Thyroid gland (tissue), 4 donors: ENCODE measurements at regions of chr15 and their contacts with region 1.

Region 1: GRCh38 chr15:80567721-80568157 is 127.4 kb upstream of the ABHD17C start:
- DNase-seq: peak; percentile 71 to 74
- H3K4me3 ChIP-seq: no peak overlapping the region
- H3K27ac ChIP-seq: no peak overlapping the region
- H3K4me1 ChIP-seq: peaks cover 0 to 7% of the 10 kb centered on the region in 2 donors
- H3K27me3 ChIP-seq: no peaks in the 10 kb centered on the region
- CTCF ChIP-seq: peak; percentile 45 to 88 (median 76)
- POLR2A ChIP-seq: no peak

Region 2: GRCh38 chr15:80695104-80695910 is 127.6 kb after region 1 on chr15 and contains the start of gene ABHD17C:
- intact Hi-C with region 1: loop called (anchors 10 kb)
- DNase-seq: peak; percentile 62 to 66
- H3K4me3 ChIP-seq: peak within 1 kb of the TSS; percentile 3 to 74 (median 64)
- H3K27ac ChIP-seq: peak within 1 kb of the TSS in 2 of 3 donors; percentile 78 to 79
- H3K4me1 ChIP-seq: peaks cover 15 to 16% of the 10 kb centered on the region in 2 donors
- H3K27me3 ChIP-seq: no peaks in the 10 kb centered on the region
- CTCF ChIP-seq: no peak
- POLR2A ChIP-seq: peak in 1 of 2 donors; percentile 75
- total RNA-seq, gene ABHD17C: 7.3 to 9.5 (median 8.4) TPM

Region 3: DNA sequence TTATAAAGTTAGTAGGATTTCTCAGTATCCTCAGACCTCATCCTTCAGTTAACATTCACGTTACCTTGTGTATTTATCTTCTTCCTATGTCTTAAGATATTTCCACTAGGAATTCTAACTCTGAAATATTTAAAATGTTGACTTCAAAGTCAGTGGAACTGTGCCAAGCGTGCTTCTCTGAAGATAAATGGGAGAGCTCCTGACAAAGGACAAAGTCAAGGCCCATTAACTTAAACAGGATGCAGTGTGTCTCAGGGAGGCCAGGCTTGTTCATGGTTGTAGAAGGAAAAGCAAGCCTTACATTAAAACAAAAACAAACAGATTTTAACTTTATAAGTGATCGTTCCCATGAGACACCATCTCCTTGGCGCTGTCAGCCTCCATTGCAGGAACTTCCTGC is 168.8 kb after region 1 on chr15:
- intact Hi-C with region 1: no loop called
- DNase-seq: no peak
- H3K4me3 ChIP-seq: no peak overlapping the region
- H3K27ac ChIP-seq: no peak overlapping the region
- H3K4me1 ChIP-seq: no peaks in the 10 kb centered on the region
- H3K27me3 ChIP-seq: no peaks in the 10 kb centered on the region
- CTCF ChIP-seq: no peak
- POLR2A ChIP-seq: no peak

Region 4: DNA sequence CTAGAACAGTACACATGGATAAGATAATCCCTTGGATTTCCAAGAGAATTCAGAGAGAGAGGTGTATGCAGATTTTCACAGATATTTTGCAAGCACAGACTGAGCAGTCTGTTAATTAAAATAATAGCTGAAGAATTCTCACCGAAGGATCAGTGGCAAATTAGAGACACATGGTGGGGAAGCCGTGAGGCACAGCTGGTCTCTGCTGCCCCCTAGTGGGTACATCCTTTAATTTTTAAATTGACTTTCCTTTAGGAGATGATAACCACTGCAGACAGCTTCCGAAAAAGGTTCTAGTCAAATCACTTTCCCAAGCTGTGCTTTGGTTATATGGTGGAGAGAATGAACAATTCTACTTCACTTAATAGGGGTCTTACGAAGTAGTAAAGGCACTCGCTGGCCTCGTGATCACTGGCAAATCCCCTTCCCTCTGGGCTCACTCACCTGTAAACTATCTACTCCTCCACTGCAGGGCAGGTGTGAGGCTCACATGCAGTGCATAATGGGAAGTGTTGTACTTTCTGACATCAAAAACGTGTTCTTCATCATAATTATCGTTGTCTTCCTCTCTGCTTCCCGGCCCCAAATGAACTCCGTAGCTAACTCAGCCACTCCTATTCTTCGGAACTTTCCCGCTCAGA is 402.4 kb after region 1 on chr15:
- intact Hi-C with region 1: loop called (anchors 10 kb)
- DNase-seq: peak; percentile 44 to 71
- H3K4me3 ChIP-seq: no peak overlapping the region
- H3K27ac ChIP-seq: no peak overlapping the region
- H3K4me1 ChIP-seq: peaks cover 22 to 32% of the 10 kb centered on the region in 2 donors
- H3K27me3 ChIP-seq: no peaks in the 10 kb centered on the region
- CTCF ChIP-seq: peak; percentile 43 to 83 (median 77)
- POLR2A ChIP-seq: no peak